H1 (cell line): ENCODE measurements at regions of chr2 and their contacts with region 1.

Region 1: DNA sequence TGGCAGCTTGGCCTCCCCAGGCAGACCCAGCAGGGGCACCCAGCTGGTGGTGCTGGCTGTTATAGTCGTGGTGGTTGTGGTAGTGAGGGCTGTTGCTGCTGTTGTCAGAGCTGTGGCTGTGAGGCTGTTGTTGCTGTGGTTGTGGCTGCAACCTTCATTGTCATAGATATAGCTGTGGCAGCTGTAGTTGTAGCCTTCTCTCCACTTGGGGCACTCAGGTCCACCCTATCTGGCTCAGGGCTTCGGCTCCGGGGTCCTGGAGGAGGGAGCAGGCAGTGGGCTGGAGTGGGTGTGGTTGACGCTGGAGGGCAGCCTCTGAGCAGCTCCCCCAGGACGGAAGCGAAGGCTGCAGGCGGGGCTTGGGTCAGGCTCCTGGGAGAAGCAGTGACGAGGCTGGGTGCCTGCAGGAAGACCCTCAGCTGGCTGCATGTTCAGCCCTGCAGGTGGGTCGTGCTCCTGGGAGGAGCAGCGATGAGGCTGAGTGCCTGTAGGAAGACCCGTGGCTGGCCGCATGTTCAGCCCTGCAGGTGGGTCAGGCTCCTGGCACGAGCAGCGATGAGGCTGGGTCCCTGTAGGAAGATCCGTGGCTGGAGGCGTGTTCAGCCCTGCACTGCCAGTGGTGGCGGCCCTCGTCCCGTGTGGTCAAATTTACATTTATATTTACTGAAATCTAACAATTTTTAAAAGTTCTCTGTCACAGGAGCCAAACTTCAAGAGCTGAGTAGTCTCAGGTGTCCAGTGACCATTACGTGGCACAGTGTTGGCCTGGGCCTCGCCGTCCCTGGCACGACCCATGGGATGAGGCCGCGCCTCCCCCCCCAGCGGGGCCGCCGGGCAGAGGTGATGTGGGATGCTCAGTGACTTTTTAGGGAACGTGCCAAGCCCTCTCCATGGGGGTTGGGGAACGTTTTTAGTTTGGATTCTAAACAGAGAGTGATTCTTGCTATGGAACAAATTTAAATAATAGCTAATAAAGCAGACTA is 79.2 kb upstream of the PXDN start:
- DNase-seq: peak; percentile 39 to 80
- H3K4me3 ChIP-seq: peak overlapping the region in 2 of 4 experiments; percentile 8 to 24; a peak in 2 of 8 replicates
- H3K27ac ChIP-seq: no peak overlapping the region
- H3K4me1 ChIP-seq: peaks cover 0 to 9% (median 6%) of the 10 kb centered on the region in 4 experiments; a peak in 5 of 7 replicates
- H3K27me3 ChIP-seq: no peaks in the 10 kb centered on the region
- CTCF ChIP-seq: peak; percentile 24 to 56 (median 50)
- EP300 ChIP-seq: no peak
- POLR2A ChIP-seq: no peak
- RAD21 ChIP-seq: peak; percentile 50 to 59

Region 2: GRCh38 chr2:1721706-1722646 is 101.5 kb before region 1 on chr2:
- CTCF ChIA-PET with region 1: no interaction called
- POLR2A ChIA-PET with region 1: no interaction called
- DNase-seq: no peak
- H3K4me3 ChIP-seq: no peak overlapping the region
- H3K27ac ChIP-seq: no peak overlapping the region
- H3K4me1 ChIP-seq: peaks cover 0 to 9% (median under 1%) of the 10 kb centered on the region in 4 experiments; a peak in 3 of 7 replicates
- H3K27me3 ChIP-seq: no peaks in the 10 kb centered on the region
- CTCF ChIP-seq: no peak
- EP300 ChIP-seq: no peak
- POLR2A ChIP-seq: no peak
- RAD21 ChIP-seq: no peak

Region 3: GRCh38 chr2:1837022-1837421 is 13.5 kb after region 1 on chr2:
- CTCF ChIA-PET with region 1: interaction called, 18 read pairs
- POLR2A ChIA-PET with region 1: interaction called, 4 read pairs
- DNase-seq: no peak
- H3K4me3 ChIP-seq: no peak overlapping the region
- H3K27ac ChIP-seq: no peak overlapping the region
- H3K4me1 ChIP-seq: peaks cover 0 to 10% (median 2%) of the 10 kb centered on the region in 4 experiments; a peak in 4 of 7 replicates
- H3K27me3 ChIP-seq: peaks cover 0 to 3% (median 0%) of the 10 kb centered on the region in 4 experiments; a peak in 2 of 7 replicates
- CTCF ChIP-seq: no peak
- EP300 ChIP-seq: no peak
- POLR2A ChIP-seq: no peak
- RAD21 ChIP-seq: no peak